ENCODE measurements at regions of chr2 and their contacts with region 1.

Region 1: DNA sequence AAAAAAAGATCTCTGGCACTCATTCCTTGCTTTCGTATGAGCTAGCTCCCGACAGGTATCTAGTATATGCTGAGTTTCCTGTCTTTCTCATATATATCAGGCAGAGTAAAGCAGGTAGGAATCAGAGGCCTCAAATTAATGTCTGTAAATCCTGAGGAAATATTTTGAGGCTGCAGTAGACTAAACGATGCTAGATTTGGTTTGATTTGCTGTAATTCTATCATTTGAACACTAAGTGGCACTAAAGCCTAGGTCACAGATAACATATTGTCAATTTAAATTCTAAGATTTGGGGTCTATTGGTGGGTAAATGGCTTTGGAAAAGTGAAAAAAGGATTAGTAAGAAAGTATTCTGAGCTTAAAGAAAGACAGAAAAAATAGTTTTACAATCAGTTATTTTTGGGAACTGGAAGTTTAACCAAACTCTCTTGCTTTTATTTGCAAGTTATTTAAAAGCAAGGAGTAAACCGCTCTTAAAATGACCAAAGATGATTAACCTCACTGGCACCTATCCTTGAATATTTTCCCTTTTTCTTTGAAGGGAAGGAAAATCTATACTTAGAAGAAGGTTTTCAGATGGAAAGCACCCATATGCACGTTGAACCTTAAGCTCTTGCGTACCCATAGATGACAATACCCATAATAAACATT is 37.6 kb upstream of the SLC4A10 start:
- DNase-seq: no peak
- H3K4me3 ChIP-seq: no peak overlapping the region
- H3K27ac ChIP-seq: no peak overlapping the region
- H3K4me1 ChIP-seq: no peaks in the 10 kb centered on the region
- H3K27me3 ChIP-seq: no peaks in the 10 kb centered on the region
- CTCF ChIP-seq: peak; percentile 17 to 54 (median 28)
- EP300 ChIP-seq: no peak
- POLR2A ChIP-seq: no peak

Region 2: GRCh38 chr2:161943011-161943410 is 356.4 kb after region 1 on chr2:
- intact Hi-C with region 1: loop called (anchors 5 kb)
- DNase-seq: no peak
- H3K4me3 ChIP-seq: no peak overlapping the region
- H3K27ac ChIP-seq: no peak overlapping the region
- H3K4me1 ChIP-seq: no peaks in the 10 kb centered on the region
- H3K27me3 ChIP-seq: peaks cover 0 to 4% (median 0%) of the 10 kb centered on the region in 4 donors
- CTCF ChIP-seq: no peak
- EP300 ChIP-seq: no peak
- POLR2A ChIP-seq: no peak

Region 3: GRCh38 chr2:162123806-162124758 is 537.4 kb after region 1 on chr2:
- intact Hi-C with region 1: loop called (anchors 10 kb)
- DNase-seq: no peak
- H3K4me3 ChIP-seq: no peak overlapping the region
- H3K27ac ChIP-seq: no peak overlapping the region
- H3K4me1 ChIP-seq: peaks cover 0 to 6% (median 2%) of the 10 kb centered on the region in 4 donors
- H3K27me3 ChIP-seq: no peaks in the 10 kb centered on the region
- CTCF ChIP-seq: peak; percentile 68 to 81 (median 75)
- EP300 ChIP-seq: no peak
- POLR2A ChIP-seq: no peak

Region 4: GRCh38 chr2:162301151-162301804 is 714.6 kb after region 1 on chr2:
- intact Hi-C with region 1: loop called (anchors 5 kb)
- DNase-seq: no peak
- H3K4me3 ChIP-seq: no peak overlapping the region
- H3K27ac ChIP-seq: no peak overlapping the region
- H3K4me1 ChIP-seq: peaks cover 0 to 30% (median 17%) of the 10 kb centered on the region in 4 donors
- H3K27me3 ChIP-seq: no peaks in the 10 kb centered on the region
- CTCF ChIP-seq: peak; percentile 79 to 89 (median 88)
- EP300 ChIP-seq: no peak
- POLR2A ChIP-seq: no peak

Measured in esophagus muscularis mucosa (tissue), 4 donors.